Activated CD4-positive, alpha-beta memory T cell treated with anti-CD3 and anti-CD28 coated beads, Interleukin-2, amount 10 ng/mL, durations not matched to agents 7 days and 5 days (primary cell): ENCODE measurements at regions of chr12 and their contacts with region 1.

Region 1: GRCh38 chr12:120710031-120710804 is at the start of gene UNC119B:
- DNase-seq: peak; percentile 76
- H3K4me3 Mint-ChIP-seq: peak within 1 kb of the TSS; percentile 84
- H3K27ac Mint-ChIP-seq: peak within 1 kb of the TSS; percentile 65
- H3K4me1 Mint-ChIP-seq: peaks cover 34% of the 10 kb centered on the region
- H3K27me3 Mint-ChIP-seq: no peaks in the 10 kb centered on the region
- total RNA-seq, gene UNC119B: 22.4 to 23.6 TPM

Region 2: DNA sequence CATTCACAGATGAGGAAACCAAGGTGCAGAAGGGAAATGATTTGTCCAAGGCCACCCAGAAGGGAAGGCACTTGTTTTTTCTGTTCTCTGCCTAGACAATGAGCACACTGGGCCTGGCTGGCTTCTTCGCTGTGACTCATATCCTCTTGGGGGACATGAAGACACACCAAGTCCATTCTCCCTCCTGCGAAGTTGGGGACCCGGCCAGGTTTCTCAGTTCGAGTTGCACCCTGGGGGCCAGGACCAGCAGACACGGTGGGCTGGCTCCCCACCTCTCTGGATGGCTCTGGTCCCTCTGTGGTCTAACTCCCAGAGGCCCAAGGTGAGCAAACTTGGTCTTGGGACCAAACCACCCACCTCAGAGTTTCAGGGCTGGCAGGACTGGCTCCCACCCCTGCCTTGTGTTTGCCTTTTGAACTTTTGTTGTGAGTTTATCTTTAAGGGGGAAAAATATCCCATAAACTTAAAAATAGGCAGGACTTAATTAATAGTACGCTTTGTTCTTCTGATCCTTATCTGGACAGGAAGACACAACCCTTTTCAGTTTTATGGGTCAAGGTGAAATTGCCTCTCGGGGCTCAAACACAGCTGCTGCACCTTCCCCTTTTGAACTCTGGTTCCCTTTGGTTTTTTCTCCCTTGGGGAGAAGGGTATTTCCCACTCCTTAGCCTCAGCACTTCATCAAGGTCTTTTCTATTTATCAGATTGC is 32.3 kb before region 1 on chr12:
- CTCF ChIA-PET with region 1: no interaction called
- POLR2A ChIA-PET with region 1: interaction called, 11 read pairs
- DNase-seq: peak; percentile 65
- H3K4me3 Mint-ChIP-seq: peak overlapping the region; percentile 62
- H3K27ac Mint-ChIP-seq: peak overlapping the region; percentile 93
- H3K4me1 Mint-ChIP-seq: peaks cover 34% of the 10 kb centered on the region
- H3K27me3 Mint-ChIP-seq: peaks cover 5% of the 10 kb centered on the region

Region 3: GRCh38 chr12:120686690-120687577 is 23.3 kb before region 1 on chr12 and contains the start of gene MLEC:
- CTCF ChIA-PET with region 1: interaction called, 4 read pairs
- POLR2A ChIA-PET with region 1: interaction called, 24 read pairs
- DNase-seq: peak; percentile 100
- H3K4me3 Mint-ChIP-seq: peak within 1 kb of the TSS; percentile 87
- H3K27ac Mint-ChIP-seq: peak within 1 kb of the TSS; percentile 87
- H3K4me1 Mint-ChIP-seq: peaks cover 63% of the 10 kb centered on the region
- H3K27me3 Mint-ChIP-seq: no peaks in the 10 kb centered on the region
- total RNA-seq, gene MLEC: 81.1 to 97.8 TPM

Region 4: DNA sequence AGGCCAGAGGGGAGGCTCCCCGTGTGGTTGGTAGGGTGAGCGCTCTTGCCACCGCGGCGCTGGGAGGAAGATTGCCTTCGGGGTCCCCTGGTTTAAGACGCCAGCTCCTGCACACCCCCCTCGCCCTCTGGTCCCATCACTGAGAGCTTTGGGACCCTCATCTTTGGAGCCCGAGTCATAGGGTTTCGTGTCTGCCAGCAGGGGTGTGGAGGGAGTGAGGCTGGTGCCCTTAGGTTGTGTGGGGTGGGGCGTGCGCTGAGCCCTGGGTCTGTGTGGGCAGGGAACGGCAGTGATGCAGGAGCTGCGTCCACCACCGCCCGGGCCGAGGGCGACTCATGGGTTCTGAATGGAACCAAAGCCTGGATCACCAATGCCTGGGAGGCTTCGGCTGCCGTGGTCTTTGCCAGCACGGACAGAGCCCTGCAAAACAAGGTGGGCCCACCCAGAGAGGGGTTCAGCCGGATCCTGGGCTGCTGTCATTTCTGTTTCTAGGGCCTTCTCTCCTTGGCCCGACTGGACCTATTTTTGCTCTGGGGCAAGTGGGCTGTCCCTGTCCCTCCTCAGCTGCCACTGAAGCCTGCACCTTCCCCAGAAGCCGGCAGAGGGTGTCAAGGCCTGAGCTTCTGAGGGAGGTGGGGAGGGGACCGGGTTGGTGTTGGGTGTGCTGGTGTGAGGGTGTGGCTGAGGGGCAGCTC is 27.5 kb after region 1 on chr12:
- CTCF ChIA-PET with region 1: no interaction called
- POLR2A ChIA-PET with region 1: no interaction called
- DNase-seq: no peak
- H3K4me3 Mint-ChIP-seq: no peak overlapping the region
- H3K27ac Mint-ChIP-seq: no peak overlapping the region
- H3K4me1 Mint-ChIP-seq: no peaks in the 10 kb centered on the region
- H3K27me3 Mint-ChIP-seq: no peaks in the 10 kb centered on the region